ENCODE measurements at regions of chr17 and their contacts with region 1.

Region 1: GRCh38 chr17:17919169-17920107 is 52.8 kb downstream of the TOM1L2 start:
- H3K4me3 ChIP-seq: no peak overlapping the region
- H3K27ac ChIP-seq: peak overlapping the region; percentile 35; the same call in 1 of the 2 replicates
- H3K4me1 ChIP-seq: peaks cover 34% of the 10 kb centered on the region
- CTCF ChIP-seq: peak; percentile 85

Region 2: DNA sequence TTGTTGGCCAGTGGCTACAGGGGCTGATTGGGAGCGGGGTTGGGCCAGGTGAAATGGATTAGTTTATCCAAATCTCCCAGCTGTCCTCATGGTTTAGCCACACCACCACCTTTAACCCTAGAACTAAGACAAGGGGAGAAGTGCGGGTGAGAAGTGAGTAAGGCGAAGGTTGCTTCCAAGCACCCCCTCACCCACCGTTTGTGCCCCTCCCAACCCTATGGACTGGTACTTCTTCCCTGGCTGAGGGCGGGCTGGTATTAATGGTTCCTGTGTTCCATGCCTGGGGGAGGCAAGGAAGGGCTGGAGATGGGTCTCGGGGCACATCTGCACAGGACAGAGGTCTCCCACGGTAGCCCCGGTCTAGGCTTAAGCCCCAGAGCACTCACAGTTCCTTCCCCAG is 591.2 kb before region 1 on chr17:
- CTCF ChIA-PET with region 1: no interaction called
- POLR2A ChIA-PET with region 1: no interaction called
- H3K4me3 ChIP-seq: no peak overlapping the region
- H3K27ac ChIP-seq: no peak overlapping the region
- H3K4me1 ChIP-seq: no peaks in the 10 kb centered on the region
- CTCF ChIP-seq: no peak

Region 3: GRCh38 chr17:17496189-17497064 is 423.0 kb before region 1 on chr17 and contains the start of gene RASD1:
- CTCF ChIA-PET with region 1: interaction called, 5 read pairs
- POLR2A ChIA-PET with region 1: interaction called, 11 read pairs
- H3K4me3 ChIP-seq: peak within 1 kb of the TSS; percentile 64
- H3K27ac ChIP-seq: peak within 1 kb of the TSS; percentile 64
- H3K4me1 ChIP-seq: no peaks in the 10 kb centered on the region
- CTCF ChIP-seq: 0 out of 2 replicates have a peak, but pooled peaks have one; percentile 25

Region 4: GRCh38 chr17:17836250-17836817 is 83.1 kb before region 1 on chr17:
- CTCF ChIA-PET with region 1: interaction called, 4 read pairs
- POLR2A ChIA-PET with region 1: interaction called, 10 read pairs
- H3K4me3 ChIP-seq: peak overlapping the region; percentile 63
- H3K27ac ChIP-seq: peak overlapping the region; percentile 99
- H3K4me1 ChIP-seq: peaks cover 34% of the 10 kb centered on the region
- CTCF ChIP-seq: peak; percentile 50

Region 5: GRCh38 chr17:17890773-17891759 is 28.4 kb before region 1 on chr17:
- CTCF ChIA-PET with region 1: interaction called, 121 read pairs
- POLR2A ChIA-PET with region 1: interaction called, 4 read pairs
- H3K4me3 ChIP-seq: no peak overlapping the region
- H3K27ac ChIP-seq: no peak overlapping the region
- H3K4me1 ChIP-seq: no peaks in the 10 kb centered on the region
- CTCF ChIP-seq: peak; percentile 93

Region 6: DNA sequence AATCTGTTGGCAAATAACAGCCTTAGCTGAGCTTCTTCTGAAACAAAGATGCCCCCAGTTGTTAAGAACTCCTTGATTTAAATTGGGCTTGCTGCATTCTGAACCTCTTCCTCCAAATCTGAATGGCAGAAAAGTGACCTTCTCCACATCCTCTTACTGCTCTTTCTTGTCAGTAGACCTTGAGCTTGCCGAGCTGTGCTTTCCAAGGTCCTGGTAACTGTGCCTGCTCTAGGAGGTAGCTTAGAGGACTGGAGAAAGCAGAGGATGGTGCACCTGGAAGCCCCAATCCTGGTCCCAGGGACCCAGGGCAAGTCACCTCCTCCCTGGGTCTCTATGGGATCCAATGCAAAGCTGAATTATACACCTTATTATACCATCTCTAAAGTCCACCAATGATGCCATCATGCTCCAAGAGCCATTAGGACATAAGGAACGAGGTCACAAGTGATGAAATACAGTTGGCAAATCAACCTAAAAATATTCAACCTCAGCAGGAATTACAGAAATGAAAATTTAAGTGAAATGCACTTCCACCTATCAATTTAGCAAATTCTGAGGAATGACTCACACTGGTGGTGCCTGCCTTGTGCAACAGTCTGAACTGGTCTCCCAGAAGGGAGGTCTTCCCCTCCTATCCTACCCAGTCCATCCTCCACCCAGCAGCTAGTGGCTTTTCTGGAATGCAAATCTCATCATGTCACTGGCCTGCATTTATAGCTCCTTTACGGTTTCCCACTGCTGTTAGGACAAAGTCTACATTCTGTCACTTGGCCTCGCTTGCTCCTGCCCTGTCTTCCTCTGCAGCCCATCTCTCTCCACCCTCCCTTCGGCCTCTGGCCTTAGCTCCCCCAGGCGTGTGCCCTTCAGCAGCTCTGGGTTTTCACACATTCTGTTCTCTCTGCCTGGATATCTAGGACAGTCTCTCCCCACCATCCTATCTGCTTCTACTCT is 16.2 kb after region 1 on chr17:
- CTCF ChIA-PET with region 1: interaction called, 59 read pairs
- POLR2A ChIA-PET with region 1: interaction called, 9 read pairs
- H3K4me3 ChIP-seq: no peak overlapping the region
- H3K27ac ChIP-seq: no peak overlapping the region
- H3K4me1 ChIP-seq: peaks cover 27% of the 10 kb centered on the region
- CTCF ChIP-seq: no peak

Region 7: GRCh38 chr17:18033442-18034099 is 114.1 kb after region 1 on chr17:
- CTCF ChIA-PET with region 1: interaction called, 54 read pairs
- POLR2A ChIA-PET with region 1: interaction called, 4 read pairs
- H3K4me3 ChIP-seq: no peak overlapping the region
- H3K27ac ChIP-seq: no peak overlapping the region
- H3K4me1 ChIP-seq: no peaks in the 10 kb centered on the region; the same call in 1 of the 2 replicates
- CTCF ChIP-seq: peak; percentile 65; the same call in 1 of the 2 replicates